Mammary epithelial cell (primary cell): ENCODE measurements at regions of chr11 and their contacts with region 1.

Region 1: DNA sequence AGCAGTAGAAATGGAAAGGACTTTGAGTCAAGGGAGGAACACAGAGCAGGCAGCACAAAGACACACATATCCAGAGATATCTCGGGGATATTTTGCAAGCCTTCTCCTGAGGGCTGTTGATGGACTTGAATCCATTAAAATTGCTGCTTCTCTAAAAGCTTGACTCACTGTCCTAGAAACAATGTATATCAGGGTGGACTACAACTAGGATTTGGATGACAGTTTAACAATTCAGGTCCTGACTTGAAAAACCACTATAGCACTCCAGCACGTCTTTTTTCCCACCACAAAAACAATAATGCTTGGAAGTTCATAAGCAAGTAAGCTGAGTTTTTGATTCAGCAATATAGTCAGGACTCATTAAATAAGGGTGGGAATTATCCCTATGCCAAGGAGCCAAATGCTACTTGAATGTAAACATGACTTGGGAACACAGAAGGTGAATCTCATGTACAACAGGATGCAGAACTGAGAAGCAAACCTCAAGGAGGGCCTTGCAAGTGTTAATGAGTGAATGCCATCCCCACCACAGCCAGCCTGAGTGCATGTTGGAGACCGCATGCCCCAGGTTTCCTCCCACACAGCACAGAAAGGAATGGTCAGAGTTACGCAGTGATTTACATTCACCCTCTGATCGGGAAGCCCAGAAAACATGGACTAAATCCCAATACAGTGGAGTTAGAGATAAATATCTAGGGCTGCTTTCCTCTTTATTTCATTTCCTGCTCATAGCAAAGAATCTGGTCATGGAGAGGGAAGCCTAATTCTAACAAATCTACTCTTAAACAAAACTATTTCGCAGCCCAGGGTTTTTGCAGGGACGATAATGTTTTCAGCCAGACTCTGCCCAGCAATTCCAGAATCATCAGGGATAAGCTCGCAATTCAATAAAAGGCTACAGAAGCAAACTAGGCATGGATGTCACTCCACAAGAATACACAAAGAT is 98.4 kb upstream of the OR9G4 start:
- DNase-seq: peak; percentile 74
- H3K4me3 ChIP-seq: no peak overlapping the region
- H3K27ac ChIP-seq: peak overlapping the region; percentile 60
- H3K4me1 ChIP-seq: peaks cover 43% of the 10 kb centered on the region
- H3K27me3 ChIP-seq: no peaks in the 10 kb centered on the region
- CTCF ChIP-seq: no peak

Region 2: GRCh38 chr11:56932572-56933220 is 85.8 kb after region 1 on chr11:
- CTCF ChIA-PET with region 1: interaction called, 4 read pairs
- dilution Hi-C with region 1: loop called (anchors 5 kb)
- in situ Hi-C with region 1: no loop called
- intact Hi-C with region 1: loop called (anchors 5 kb)
- DNase-seq: peak; percentile 97
- H3K4me3 ChIP-seq: no peak overlapping the region
- H3K27ac ChIP-seq: peak overlapping the region; percentile 48
- H3K4me1 ChIP-seq: peaks cover 15% of the 10 kb centered on the region
- H3K27me3 ChIP-seq: no peaks in the 10 kb centered on the region
- CTCF ChIP-seq: no peak

Region 3: GRCh38 chr11:57001674-57002401 is 154.9 kb after region 1 on chr11:
- CTCF ChIA-PET with region 1: no interaction called
- dilution Hi-C with region 1: loop called (anchors 5 kb)
- in situ Hi-C with region 1: no loop called
- intact Hi-C with region 1: no loop called
- DNase-seq: peak; percentile 9
- H3K4me3 ChIP-seq: no peak overlapping the region
- H3K27ac ChIP-seq: no peak overlapping the region
- H3K4me1 ChIP-seq: no peaks in the 10 kb centered on the region
- H3K27me3 ChIP-seq: no peaks in the 10 kb centered on the region
- CTCF ChIP-seq: peak; percentile 41 to 48